ENCODE measurements at regions of chr5 and their contacts with region 1.

Region 1: GRCh38 chr5:32076699-32077695 is 97.1 kb downstream of the GOLPH3 start:
- DNase-seq: no peak
- H3K4me3 ChIP-seq: no peak overlapping the region
- CTCF ChIP-seq: peak; percentile 56

Region 2: DNA sequence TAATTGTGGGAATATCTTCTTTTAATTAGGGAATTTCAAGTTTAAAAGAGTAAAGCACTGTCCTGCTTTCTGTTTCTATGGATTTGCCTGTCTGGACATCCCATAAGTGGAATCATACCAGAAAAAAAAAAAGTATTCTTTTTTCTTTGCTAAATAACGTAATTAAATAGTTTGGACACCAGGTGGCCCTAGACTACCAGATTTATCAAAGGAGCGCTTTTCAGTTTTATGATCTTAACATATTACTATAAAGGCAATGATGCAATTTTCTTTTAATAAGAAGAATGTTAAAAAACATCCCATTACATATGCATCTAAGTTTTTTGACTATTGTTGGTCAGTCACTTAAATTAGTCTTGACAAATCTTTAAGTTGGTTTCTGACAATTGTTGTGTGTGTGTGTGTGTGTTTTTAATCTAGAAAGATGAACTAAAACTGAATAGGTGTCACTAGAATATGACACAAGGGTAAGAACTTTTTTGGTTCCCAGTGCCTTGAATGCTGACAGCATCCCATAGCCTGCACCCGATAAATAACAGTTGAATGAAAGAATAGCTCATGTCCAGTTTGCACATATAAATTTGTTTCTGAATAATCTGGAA is 495.4 kb before region 1 on chr5:
- CTCF ChIA-PET with region 1: interaction called, 10 read pairs
- POLR2A ChIA-PET with region 1: no interaction called
- DNase-seq: no peak
- H3K4me3 ChIP-seq: no peak overlapping the region
- CTCF ChIP-seq: no peak

Region 3: DNA sequence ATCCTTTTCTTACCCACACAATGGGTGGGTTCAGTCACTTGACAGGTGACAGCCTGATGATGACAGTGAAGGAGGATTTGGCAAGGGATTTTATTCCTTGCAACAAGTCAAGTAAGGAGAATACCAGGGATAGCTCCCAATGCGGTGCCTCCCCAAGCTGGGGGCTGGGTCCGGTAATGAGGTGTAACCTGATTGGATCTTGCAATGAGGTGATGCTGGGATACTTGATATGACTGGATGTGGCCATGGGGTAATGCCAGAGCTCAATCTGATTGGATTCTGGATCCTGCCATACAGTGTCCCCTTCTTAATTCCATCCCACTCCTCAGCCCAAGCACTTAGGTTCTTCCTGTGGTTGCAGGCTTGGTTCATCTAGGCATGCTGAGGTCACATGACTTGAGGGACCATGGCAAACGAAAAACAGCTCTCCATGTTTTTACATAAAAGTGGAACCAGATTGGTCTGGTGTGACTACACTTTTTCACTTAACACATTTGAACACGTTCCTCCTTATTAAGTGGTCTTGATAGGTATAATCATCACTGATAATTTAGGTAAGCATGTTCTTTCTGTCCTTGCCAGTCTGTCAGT is 257.0 kb before region 1 on chr5:
- CTCF ChIA-PET with region 1: interaction called, 195 read pairs
- POLR2A ChIA-PET with region 1: no interaction called
- DNase-seq: no peak
- H3K4me3 ChIP-seq: no peak overlapping the region
- CTCF ChIP-seq: no peak

Region 4: DNA sequence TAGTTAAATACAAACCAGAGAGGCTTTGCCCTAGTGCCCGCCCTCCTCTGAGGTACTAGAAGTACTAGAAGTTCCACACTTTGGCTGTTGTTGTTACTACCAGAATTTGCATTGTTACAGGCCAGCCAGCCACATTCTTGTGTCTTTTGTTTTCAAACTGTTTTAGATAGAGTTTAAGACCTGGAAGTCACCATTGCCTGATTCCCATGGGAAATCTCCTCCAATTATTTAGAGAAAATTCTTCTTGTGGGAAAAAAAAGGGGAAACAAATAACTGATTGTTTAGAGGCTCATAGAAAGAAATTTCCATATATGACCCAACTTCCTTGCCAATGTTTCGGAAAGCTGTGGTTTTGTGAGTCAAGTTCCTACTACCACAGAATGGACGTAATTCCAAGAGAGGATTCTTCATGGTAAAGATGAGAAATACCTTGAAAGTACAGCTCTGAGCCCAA is 155.1 kb before region 1 on chr5:
- CTCF ChIA-PET with region 1: interaction called, 12 read pairs
- POLR2A ChIA-PET with region 1: no interaction called
- DNase-seq: no peak
- H3K4me3 ChIP-seq: no peak overlapping the region
- CTCF ChIP-seq: no peak

Region 5: GRCh38 chr5:32057162-32058096 is 19.6 kb before region 1 on chr5:
- CTCF ChIA-PET with region 1: interaction called, 32 read pairs
- POLR2A ChIA-PET with region 1: no interaction called
- DNase-seq: no peak
- H3K4me3 ChIP-seq: no peak overlapping the region
- CTCF ChIP-seq: no peak

Region 6: DNA sequence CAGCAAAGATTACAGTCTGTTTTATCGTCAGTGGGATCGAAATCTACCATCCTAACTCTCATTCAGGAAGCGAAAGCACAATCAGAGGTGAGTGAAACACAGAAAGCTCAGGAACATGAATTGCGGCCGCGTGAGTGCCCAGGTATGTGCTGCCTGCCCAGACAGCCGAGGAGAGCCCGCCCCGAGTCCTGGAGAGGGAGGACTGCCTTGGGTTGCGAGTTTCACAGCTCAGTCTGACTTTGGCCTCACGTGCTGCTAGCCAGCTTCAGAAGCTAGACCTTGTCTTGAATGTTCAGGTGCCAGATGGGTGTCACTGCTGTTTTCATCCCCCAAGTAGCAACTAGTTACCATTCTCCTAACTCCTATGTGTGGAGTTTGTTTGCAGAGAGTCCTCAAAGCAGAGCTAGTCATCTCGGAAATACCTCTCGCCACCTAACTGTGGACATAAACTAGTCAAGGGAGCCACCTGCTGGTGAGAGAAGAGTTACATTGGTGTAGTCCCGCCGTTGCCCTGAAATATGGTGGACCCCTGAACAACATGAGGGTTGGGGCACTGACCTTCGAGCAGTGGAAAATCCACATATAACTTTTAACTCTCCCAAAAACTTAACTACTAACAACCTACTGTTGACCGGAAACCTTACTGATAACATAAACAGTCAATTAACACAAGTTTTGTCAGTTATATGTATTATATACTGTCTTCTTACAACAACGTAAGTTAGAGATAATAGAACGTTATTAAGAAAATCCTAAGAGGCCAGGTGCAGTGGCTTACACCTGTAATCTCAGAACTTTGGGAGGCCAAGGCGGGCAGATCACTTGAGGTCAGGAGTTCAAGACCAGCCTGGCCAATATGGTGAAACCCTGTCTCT is 16.2 kb after region 1 on chr5:
- CTCF ChIA-PET with region 1: interaction called, 20 read pairs
- POLR2A ChIA-PET with region 1: no interaction called
- DNase-seq: no peak
- H3K4me3 ChIP-seq: no peak overlapping the region
- CTCF ChIP-seq: peak; percentile 74

Measured in AG04449 (cell line).